Activated CD4-positive, alpha-beta T cell treated with anti-CD3 and anti-CD28 coated beads, Interleukin-2, amount 10 ng/mL, durations not matched to agents 7 days and 5 days (primary cell): ENCODE measurements at regions of chr6 and their contacts with region 1.

Region 1: DNA sequence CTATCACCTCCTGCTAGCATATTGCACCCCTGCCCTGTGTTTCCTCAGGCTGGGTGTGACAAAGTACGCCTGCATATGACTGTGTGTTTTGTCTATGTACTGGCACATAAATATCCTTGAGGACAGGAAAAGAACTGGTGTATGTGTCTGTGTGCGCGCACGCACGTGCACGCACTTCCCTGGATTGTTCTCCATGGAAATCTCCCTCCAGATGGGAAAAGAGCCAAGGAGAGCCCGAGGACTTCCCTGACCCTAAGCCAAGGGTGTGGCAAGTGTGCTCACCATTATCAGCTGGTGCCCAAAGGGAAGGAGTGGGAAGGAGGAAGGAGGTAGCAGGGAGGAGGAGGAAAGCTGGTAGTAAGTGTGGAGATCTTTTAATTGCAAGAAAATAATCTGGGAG is 117.6 kb downstream of the HIVEP2 start:
- DNase-seq: no peak
- H3K4me3 Mint-ChIP-seq: no peak overlapping the region
- H3K27ac Mint-ChIP-seq: no peak overlapping the region
- H3K4me1 Mint-ChIP-seq: peaks cover 40% of the 10 kb centered on the region
- H3K27me3 Mint-ChIP-seq: no peaks in the 10 kb centered on the region

Region 2: DNA sequence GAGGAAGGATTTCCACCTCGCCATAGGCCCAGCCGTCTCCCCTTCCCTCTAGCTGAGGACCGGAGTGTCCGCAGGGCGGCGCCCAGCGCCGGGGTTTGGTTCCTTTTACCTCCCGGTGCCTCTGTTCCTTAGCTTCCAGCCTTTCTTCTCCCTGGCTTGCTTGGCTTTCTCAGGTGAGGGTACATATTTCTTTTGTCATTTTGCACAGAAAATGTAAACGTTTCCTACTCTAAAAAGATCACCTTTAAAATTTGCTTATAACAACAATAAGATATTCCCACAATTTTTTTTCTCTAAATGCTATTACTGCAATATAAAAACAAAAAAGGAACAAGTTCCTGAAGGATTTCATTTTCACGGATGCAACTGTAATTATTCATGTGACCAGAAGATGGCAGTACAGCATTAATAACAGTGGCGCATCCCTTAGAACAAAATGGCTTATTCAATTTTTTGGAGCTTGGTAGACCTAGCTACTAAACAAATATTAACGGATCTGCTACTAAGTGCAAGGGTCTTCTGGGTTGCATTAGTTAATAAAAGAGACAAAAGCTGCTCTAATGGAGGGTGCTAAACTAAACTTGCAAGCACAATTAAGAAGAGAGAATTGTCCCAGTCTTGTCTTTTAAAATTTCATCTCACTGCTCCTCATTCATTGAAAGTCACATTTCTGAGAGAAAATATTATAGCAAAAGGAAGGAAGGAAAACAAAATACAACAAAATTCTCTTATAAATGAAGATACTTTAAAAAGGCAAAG is 352.7 kb before region 1 on chr6:
- CTCF ChIA-PET with region 1: no interaction called
- POLR2A ChIA-PET with region 1: no interaction called
- DNase-seq: peak; percentile 13
- H3K4me3 Mint-ChIP-seq: no peak overlapping the region
- H3K27ac Mint-ChIP-seq: no peak overlapping the region
- H3K4me1 Mint-ChIP-seq: peaks cover 9% of the 10 kb centered on the region
- H3K27me3 Mint-ChIP-seq: no peaks in the 10 kb centered on the region

Region 3: GRCh38 chr6:142781129-142781528 is 46.2 kb before region 1 on chr6:
- CTCF ChIA-PET with region 1: no interaction called
- POLR2A ChIA-PET with region 1: no interaction called
- DNase-seq: no peak
- H3K4me3 Mint-ChIP-seq: no peak overlapping the region
- H3K27ac Mint-ChIP-seq: no peak overlapping the region
- H3K4me1 Mint-ChIP-seq: peaks cover 17% of the 10 kb centered on the region
- H3K27me3 Mint-ChIP-seq: no peaks in the 10 kb centered on the region

Region 4: GRCh38 chr6:142845624-142846458 is 18.5 kb after region 1 on chr6:
- CTCF ChIA-PET with region 1: interaction called, 10 read pairs
- POLR2A ChIA-PET with region 1: no interaction called
- DNase-seq: peak; percentile 74
- H3K4me3 Mint-ChIP-seq: peak overlapping the region; percentile 77
- H3K27ac Mint-ChIP-seq: peak overlapping the region; percentile 96
- H3K4me1 Mint-ChIP-seq: peaks cover 89% of the 10 kb centered on the region
- H3K27me3 Mint-ChIP-seq: no peaks in the 10 kb centered on the region